Endothelial cell of umbilical vein (primary cell): ENCODE measurements at regions of chr1 and their contacts with region 1.

Region 1: GRCh38 chr1:178310685-178311105 is 186.1 kb downstream of the CLEC20A start:
- DNase-seq: peak; percentile 70
- H3K4me3 ChIP-seq: no peak overlapping the region
- H3K27ac ChIP-seq: no peak overlapping the region
- H3K4me1 ChIP-seq: no peaks in the 10 kb centered on the region
- H3K27me3 ChIP-seq: no peaks in the 10 kb centered on the region
- CTCF ChIP-seq: peak; percentile 50 to 56
- POLR2A ChIP-seq: no peak

Region 2: GRCh38 chr1:178143730-178144690 is 166.7 kb before region 1 on chr1:
- CTCF ChIA-PET with region 1: no interaction called
- POLR2A ChIA-PET with region 1: no interaction called
- dilution Hi-C with region 1: no loop called
- intact Hi-C with region 1: no loop called
- DNase-seq: no peak
- H3K4me3 ChIP-seq: no peak overlapping the region
- H3K27ac ChIP-seq: no peak overlapping the region
- H3K4me1 ChIP-seq: no peaks in the 10 kb centered on the region
- H3K27me3 ChIP-seq: no peaks in the 10 kb centered on the region
- CTCF ChIP-seq: no peak
- POLR2A ChIP-seq: no peak

Region 3: GRCh38 chr1:178300352-178300699 is 10.4 kb before region 1 on chr1:
- CTCF ChIA-PET with region 1: interaction called, 81 read pairs
- POLR2A ChIA-PET with region 1: no interaction called
- dilution Hi-C with region 1: no loop called
- intact Hi-C with region 1: no loop called
- DNase-seq: no peak
- H3K4me3 ChIP-seq: no peak overlapping the region
- H3K27ac ChIP-seq: no peak overlapping the region
- H3K4me1 ChIP-seq: peaks cover 10% of the 10 kb centered on the region
- H3K27me3 ChIP-seq: no peaks in the 10 kb centered on the region
- CTCF ChIP-seq: no peak
- POLR2A ChIP-seq: no peak

Region 4: GRCh38 chr1:178344513-178345082 is 33.9 kb after region 1 on chr1:
- CTCF ChIA-PET with region 1: interaction called, 57 read pairs
- POLR2A ChIA-PET with region 1: no interaction called
- dilution Hi-C with region 1: no loop called
- intact Hi-C with region 1: loop called (anchors 2 kb)
- DNase-seq: peak; percentile 87
- H3K4me3 ChIP-seq: no peak overlapping the region
- H3K27ac ChIP-seq: peak overlapping the region; percentile 72
- H3K4me1 ChIP-seq: peaks cover 27% of the 10 kb centered on the region
- H3K27me3 ChIP-seq: no peaks in the 10 kb centered on the region
- CTCF ChIP-seq: peak; percentile 29 to 50
- POLR2A ChIP-seq: no peak

Region 5: DNA sequence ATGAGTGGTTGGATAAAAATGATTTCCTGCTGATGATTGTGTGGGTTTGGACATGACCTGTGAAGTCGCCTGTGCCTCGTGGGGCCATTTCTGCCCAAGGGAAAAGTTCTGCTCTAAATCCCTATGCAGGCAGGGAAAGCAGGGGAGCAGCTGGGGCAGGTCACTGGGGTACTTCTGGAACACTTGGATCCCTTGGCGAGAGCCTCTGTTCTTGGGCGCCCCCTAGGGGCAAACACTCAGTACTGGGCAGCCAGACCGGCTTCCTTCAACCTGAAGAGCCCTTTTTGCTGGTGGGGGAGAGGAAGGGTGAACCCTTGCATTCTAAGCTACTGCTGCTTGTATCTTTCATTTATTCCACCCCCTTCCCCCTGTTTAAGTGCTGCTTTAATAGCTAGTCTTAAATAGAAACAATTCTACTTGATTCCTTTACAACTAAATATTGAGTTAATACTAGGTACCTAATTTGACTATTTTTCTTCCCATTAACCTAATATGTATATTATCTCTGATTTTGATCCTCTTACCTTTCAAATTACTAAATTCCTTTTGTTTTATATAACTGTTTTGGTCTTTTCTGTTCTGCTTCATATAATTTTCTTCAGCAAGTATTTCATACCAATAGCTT is 191.1 kb after region 1 on chr1:
- CTCF ChIA-PET with region 1: interaction called, 240 read pairs
- POLR2A ChIA-PET with region 1: no interaction called
- dilution Hi-C with region 1: no loop called
- intact Hi-C with region 1: loop called (anchors 2 kb)
- DNase-seq: peak; percentile 68
- H3K4me3 ChIP-seq: no peak overlapping the region
- H3K27ac ChIP-seq: no peak overlapping the region
- H3K4me1 ChIP-seq: no peaks in the 10 kb centered on the region
- H3K27me3 ChIP-seq: no peaks in the 10 kb centered on the region
- CTCF ChIP-seq: peak; percentile 92 to 96
- POLR2A ChIP-seq: no peak

Region 6: GRCh38 chr1:178532392-178532791 is 221.7 kb after region 1 on chr1:
- CTCF ChIA-PET with region 1: interaction called, 88 read pairs
- POLR2A ChIA-PET with region 1: interaction called, 4 read pairs
- dilution Hi-C with region 1: no loop called
- intact Hi-C with region 1: loop called (anchors 2 kb)
- DNase-seq: peak; percentile 82
- H3K4me3 ChIP-seq: no peak overlapping the region
- H3K27ac ChIP-seq: no peak overlapping the region
- H3K4me1 ChIP-seq: no peaks in the 10 kb centered on the region
- H3K27me3 ChIP-seq: no peaks in the 10 kb centered on the region
- CTCF ChIP-seq: peak; percentile 87 to 89
- POLR2A ChIP-seq: no peak

Region 7: DNA sequence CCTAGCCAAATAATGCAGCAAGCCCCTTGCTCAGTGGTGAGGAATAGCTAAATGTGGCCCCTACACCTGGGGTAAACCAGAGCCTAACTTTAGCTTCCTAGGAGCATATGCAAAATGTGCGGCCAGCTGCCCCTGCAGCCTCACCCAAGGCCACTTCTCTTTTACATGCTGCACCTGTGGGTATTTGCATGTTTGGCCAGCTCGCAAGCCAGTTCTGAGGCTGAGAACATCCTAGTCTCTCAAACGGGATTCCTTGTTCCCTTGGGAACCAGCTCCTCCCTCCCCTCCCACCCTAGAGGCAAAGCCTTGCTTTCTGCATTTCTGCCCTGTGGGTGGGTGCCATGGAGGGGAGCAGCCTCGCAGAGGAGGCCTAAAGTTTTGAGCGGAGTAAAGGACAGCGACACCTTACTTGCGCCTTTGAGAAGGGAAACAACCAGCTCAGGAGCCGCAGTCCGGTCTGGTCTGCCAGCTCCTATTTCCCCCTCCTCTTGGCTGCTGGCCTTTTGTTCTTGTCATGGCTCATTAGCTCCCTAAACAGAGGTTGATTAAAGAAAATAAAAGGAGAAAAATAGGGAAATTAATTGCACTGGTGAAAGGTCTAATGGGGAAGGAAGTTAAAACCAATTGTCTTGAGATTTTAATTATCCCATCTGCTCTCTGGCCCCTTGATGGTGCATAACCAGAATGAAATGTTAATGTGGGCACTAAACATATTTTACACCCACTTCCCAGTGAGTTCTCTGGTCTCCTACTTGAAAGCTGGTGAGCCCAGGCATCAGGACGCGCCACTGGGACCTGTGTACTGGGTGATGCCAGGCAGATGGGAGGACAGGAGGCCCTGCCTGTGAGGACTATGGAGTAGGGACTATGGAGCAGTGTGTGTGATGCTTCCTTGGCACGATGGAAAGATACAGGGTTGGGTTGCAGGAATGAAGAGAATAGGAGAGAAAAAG is 270.9 kb after region 1 on chr1:
- CTCF ChIA-PET with region 1: no interaction called
- POLR2A ChIA-PET with region 1: no interaction called
- dilution Hi-C with region 1: no loop called
- intact Hi-C with region 1: no loop called
- DNase-seq: no peak
- H3K4me3 ChIP-seq: no peak overlapping the region
- H3K27ac ChIP-seq: no peak overlapping the region
- H3K4me1 ChIP-seq: no peaks in the 10 kb centered on the region
- H3K27me3 ChIP-seq: peaks cover 5 to 11% of the 10 kb centered on the region in 2 experiments
- CTCF ChIP-seq: no peak
- POLR2A ChIP-seq: no peak